ENCODE measurements at regions of chr17 and their contacts with region 1.

Region 1: DNA sequence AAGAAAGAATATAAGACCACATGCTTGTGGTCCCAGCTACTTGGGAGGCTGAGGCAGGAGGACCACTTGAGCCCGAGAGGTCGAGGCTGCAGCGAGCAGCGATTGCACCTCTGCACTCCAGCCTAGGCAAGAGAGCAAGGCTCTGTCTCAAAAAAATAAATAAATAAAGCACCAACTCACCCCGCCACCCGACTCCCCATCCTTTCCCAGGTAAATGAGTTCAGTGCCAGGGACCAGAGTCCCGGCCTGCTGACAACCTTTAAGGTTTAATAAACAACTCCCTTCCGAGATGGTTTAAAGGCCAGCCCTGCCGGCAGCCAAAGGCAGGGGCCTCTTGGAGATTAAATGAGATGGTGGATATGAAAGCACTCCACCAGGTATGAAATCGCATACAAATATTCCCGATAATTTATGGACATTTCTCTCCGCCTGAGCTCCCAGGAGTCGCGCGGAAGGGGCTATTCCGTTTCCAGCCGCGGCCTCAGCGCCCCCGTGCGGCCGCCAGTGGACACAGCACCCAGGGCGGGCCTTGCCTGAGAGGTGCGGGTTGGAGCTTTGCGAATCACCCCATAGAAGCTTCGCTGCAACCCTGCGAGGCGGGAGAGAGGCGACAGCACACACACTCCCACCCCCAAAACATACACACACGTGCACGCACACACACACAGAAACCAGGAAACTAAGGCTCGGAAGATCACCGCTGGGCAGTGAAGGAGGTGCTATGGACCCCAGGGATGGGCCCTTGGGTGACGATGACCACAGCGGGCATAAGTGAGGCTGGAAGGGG is 4.0 kb upstream of the RPL38 start:
- DNase-seq: peak; percentile 66
- H3K4me3 Mint-ChIP-seq: no peak overlapping the region
- H3K27ac Mint-ChIP-seq: no peak overlapping the region
- H3K4me1 Mint-ChIP-seq: peaks cover 18% of the 10 kb centered on the region
- H3K27me3 Mint-ChIP-seq: peaks cover 11% of the 10 kb centered on the region

Region 2: DNA sequence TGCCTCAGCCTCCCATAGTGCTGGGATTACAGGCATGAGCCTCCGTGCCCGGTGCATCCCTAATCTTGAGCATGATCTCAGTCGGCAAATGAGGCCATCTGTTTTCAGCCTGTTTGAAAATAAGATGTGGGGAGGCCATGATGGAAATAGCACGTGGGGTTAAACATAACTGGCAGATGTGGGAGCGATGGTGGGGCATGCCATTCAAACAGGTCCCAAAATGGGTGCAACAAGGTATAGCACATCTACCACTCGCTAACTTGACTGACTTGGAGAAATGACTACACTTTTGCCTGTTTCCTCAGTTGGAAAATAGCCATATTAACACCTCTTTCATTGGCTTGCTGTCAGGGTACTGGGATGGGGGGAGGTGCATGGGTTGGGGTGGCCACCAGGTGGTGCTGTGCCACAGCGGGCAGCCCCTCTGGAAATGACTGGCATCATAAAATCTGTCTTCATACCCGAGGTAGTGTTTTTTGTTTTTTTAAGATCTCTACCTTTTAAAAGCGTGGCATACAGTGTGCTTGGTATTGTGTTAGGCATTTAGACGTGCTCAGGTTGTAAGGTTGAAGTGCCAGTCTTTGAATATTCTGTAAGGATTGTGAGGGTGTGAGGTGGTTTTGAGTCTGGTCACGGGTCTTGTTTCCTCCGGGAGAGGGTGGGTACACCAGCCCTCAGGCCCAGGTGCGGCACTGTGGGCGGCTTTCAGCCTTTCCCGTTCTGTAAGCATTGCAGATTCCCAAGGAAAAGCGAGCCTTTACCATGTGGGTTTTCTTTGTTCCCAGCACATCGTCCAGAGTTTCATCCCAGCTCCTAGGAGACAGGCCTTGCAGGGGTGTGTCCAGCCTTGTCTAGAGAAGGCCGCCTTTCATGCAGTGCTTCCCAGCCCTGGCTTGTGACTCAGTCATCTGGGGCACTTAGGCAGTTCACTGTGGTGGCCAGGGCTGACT is 11.0 kb after region 1 on chr17:
- CTCF ChIA-PET with region 1: interaction called, 10 read pairs
- POLR2A ChIA-PET with region 1: no interaction called
- DNase-seq: peak; percentile 78
- H3K4me3 Mint-ChIP-seq: no peak overlapping the region
- H3K27ac Mint-ChIP-seq: peak overlapping the region; percentile 33
- H3K4me1 Mint-ChIP-seq: peaks cover 67% of the 10 kb centered on the region
- H3K27me3 Mint-ChIP-seq: peaks cover 3% of the 10 kb centered on the region